Stomach (tissue), 19 donors: ENCODE measurements at regions of chr9 and their contacts with region 1.

Region 1: DNA sequence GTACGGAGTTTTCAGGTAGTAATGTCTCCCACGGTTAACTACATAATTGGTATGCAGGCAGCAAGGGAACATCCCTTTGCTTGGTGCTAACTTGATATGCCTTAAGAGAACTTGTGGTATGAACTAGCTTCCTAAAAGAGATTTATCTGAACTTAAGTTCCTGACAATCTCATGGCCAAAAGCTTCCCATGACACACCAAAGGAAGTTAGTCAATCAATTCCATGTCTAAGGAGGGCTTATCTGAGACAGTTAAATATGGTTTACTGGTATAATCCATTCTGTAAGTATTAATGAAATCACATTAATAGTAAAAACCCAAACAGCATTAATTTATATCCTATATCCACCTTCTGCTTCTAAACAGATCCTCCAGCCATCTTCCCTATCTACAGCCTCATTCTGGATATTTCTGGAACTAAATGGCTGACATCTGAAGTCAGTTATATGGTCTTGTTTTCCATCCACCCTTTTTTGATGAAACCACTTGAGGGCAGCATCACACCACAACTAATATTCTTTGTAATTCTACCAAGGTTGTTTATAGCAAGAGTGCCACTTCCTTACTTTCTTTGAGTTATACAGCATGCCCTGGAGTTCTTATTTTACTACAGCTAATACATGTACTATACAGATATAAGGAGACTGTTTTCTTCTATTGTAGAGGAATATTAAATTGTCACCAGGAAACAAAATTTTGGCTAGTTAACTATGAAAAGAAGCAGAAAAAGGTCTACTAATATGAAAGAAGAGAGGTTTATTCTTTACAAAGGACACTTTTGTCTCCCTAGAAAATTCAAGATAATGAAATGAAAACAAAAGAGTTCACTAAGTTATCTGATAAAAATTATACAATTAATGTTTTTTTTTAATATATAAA is 34.7 kb downstream of the SHOC1 start:
- DNase-seq: peak; percentile 36 to 93
- H3K4me3 ChIP-seq: no peak overlapping the region
- H3K27ac ChIP-seq: peak overlapping the region in 2 of 5 donors; percentile 21 to 32
- H3K4me1 ChIP-seq: peaks cover 0 to 10% (median 3%) of the 10 kb centered on the region in 4 donors
- H3K27me3 ChIP-seq: no peaks in the 10 kb centered on the region
- CTCF ChIP-seq: peak in 5 of 7 experiments; percentile 34 to 78 (median 76)
- EP300 ChIP-seq: no peak
- POLR2A ChIP-seq: no peak

Region 2: DNA sequence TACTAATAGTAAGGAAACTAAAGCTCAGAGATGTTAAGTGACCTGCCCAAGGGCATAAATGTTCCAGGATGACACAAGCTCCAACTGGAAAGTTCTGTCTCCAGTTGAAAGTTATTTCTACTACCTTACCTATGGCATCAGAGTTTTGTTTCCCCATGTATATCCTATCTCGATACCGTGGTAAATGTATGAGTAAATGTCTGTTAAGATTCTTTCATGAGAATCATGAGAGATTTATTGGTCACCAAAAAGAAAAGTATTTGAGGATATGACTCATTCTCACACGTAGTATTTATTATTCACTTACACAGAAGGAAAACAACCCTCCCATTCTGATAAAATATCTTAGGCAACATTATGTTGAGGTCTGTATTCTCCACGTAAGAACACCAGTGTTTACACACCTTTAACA is 45.8 kb after region 1 on chr9:
- intact Hi-C with region 1: no loop called
- DNase-seq: peak in 1 of 2 donors; percentile 60
- H3K4me3 ChIP-seq: no peak overlapping the region
- H3K27ac ChIP-seq: peak overlapping the region in 4 of 5 donors; percentile 65 to 87 (median 70)
- H3K4me1 ChIP-seq: peaks cover 0 to 23% (median 0%) of the 10 kb centered on the region in 4 donors
- H3K27me3 ChIP-seq: no peaks in the 10 kb centered on the region
- CTCF ChIP-seq: no peak
- EP300 ChIP-seq: no peak
- POLR2A ChIP-seq: no peak

Region 3: DNA sequence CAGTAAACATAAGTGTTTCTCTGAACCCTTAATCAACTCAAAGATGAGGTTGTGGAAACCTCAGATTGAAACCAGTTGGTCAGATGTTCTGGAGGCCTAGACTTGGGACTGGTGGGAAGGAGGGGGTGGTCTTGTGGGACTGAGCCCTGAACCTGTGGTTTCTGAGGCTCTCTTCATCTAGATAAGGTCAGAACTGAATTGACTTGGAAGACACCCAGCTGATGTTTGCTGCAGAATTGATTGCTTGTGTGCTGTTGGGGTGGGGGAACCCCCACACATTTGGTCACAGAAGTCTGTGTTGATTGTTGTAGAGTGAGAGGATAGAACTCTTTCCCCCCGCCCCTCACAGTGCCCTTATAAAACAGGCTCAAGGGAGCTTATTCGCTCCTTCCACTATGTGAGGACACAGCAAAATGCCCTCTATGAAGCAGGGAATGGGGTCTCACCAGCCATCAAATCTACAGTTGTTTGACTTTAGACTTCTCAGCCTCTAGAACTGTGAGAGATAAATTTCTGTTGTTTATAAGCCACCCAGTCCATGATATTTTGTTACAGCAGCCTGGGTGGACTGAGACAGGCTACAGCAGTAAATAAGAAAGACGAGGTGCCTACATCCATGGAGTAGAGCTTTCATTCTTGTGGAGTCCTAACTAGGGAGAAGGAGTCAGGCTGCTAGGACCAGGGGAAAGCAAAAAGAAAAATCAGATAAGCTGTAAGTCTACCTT is 110.9 kb after region 1 on chr9:
- intact Hi-C with region 1: no loop called
- DNase-seq: no peak
- H3K4me3 ChIP-seq: no peak overlapping the region
- H3K27ac ChIP-seq: peak overlapping the region in 3 of 5 donors; percentile 10 to 38 (median 22)
- H3K4me1 ChIP-seq: peaks cover 0 to 15% (median 6%) of the 10 kb centered on the region in 4 donors
- H3K27me3 ChIP-seq: no peaks in the 10 kb centered on the region
- CTCF ChIP-seq: no peak
- EP300 ChIP-seq: no peak
- POLR2A ChIP-seq: no peak

Region 4: DNA sequence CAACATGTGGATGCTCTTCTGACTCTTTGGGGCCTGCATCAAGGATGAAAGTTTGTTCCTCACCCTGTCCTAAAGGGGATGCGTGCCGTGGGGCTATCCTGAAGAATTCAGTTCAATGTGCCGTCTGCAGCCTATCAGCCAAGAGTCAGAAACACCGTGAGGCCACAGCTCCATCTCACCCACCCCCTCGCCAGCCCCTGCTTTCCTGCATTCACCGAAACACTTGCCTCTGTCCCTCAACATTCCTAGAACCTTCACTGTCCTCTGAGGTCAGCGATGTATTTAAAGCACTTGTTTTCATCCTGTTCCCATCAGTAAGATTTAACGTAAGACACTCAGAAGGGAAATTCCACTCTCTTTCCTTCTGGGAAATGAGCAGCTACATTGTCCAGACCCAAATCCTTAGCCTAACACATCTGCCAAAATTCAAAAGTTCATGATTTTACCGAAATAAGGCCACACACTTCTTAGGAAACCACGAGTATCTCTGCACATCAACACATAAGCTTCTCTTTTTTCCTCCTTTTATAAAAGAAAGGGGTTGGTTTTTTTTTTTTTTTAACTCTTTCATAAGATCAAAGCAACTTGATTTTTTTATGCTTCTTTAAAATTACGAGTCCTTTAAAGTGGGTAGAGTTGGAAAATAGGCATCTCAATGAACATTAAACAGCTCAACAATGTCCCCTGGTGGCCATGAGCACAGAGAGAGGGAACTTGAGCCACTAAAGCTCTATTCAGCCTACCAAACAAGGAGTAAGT is 314.4 kb after region 1 on chr9:
- intact Hi-C with region 1: loop called (anchors 5 kb)
- DNase-seq: peak; percentile 72 to 92
- H3K4me3 ChIP-seq: no peak overlapping the region
- H3K27ac ChIP-seq: peak overlapping the region in 4 of 5 donors; percentile 67 to 84 (median 81)
- H3K4me1 ChIP-seq: peaks cover 6 to 71% (median 29%) of the 10 kb centered on the region in 4 donors
- H3K27me3 ChIP-seq: no peaks in the 10 kb centered on the region
- CTCF ChIP-seq: peak in 5 of 7 experiments; percentile 74 to 97 (median 87)
- EP300 ChIP-seq: peak; percentile 82
- POLR2A ChIP-seq: no peak

Region 5: GRCh38 chr9:112288029-112288428 is 528.0 kb after region 1 on chr9:
- intact Hi-C with region 1: no loop called
- DNase-seq: peak in 1 of 2 donors; percentile 20
- H3K4me3 ChIP-seq: no peak overlapping the region
- H3K27ac ChIP-seq: peak overlapping the region in 3 of 5 donors; percentile 21 to 55 (median 27)
- H3K4me1 ChIP-seq: peaks cover 5 to 23% (median 11%) of the 10 kb centered on the region in 4 donors
- H3K27me3 ChIP-seq: no peaks in the 10 kb centered on the region
- CTCF ChIP-seq: no peak
- EP300 ChIP-seq: no peak
- POLR2A ChIP-seq: no peak